ENCODE measurements at regions of chr6 and their contacts with region 1.

Region 1: DNA sequence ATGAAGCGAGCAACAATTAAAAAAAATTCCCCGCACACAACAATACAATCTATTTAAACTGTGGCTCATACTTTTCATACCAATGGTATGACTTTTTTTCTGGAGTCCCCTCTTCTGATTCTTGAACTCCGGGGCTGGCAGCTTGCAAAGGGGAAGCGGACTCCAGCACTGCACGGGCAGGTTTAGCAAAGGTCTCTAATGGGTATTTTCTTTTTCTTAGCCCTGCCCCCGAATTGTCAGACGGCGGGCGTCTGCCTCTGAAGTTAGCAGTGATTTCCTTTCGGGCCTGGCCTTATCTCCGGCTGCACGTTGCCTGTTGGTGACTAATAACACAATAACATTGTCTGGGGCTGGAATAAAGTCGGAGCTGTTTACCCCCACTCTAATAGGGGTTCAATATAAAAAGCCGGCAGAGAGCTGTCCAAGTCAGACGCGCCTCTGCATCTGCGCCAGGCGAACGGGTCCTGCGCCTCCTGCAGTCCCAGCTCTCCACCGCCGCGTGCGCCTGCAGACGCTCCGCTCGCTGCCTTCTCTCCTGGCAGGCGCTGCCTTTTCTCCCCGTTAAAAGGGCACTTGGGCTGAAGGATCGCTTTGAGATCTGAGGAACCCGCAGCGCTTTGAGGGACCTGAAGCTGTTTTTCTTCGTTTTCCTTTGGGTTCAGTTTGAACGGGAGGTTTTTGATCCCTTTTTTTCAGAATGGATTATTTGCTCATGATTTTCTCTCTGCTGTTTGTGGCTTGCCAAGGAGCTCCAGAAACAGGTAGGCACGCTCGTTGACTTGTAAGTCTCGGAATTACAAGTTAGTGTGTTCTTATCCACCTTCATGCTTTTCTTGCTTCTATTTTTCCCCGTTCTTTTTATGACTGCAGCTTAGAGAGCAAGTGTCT is at the start of gene EDN1:
- DNase-seq: peak; percentile 83
- H3K4me3 ChIP-seq: peak within 1 kb of the TSS; percentile 43
- H3K27ac ChIP-seq: peak within 1 kb of the TSS; percentile 79
- H3K4me1 ChIP-seq: peaks cover 8% of the 10 kb centered on the region
- H3K27me3 ChIP-seq: no peaks in the 10 kb centered on the region
- CTCF ChIP-seq: peak; percentile 52
- total RNA-seq, gene EDN1: 9.5 to 16.2 TPM

Region 2: GRCh38 chr6:12150812-12151432 is 139.3 kb before region 1 on chr6:
- intact Hi-C with region 1: loop called (anchors 10 kb)
- DNase-seq: peak; percentile 53
- H3K4me3 ChIP-seq: no peak overlapping the region
- H3K27ac ChIP-seq: peak overlapping the region; percentile 31
- H3K4me1 ChIP-seq: no peaks in the 10 kb centered on the region
- H3K27me3 ChIP-seq: no peaks in the 10 kb centered on the region
- CTCF ChIP-seq: peak; percentile 66

Region 3: GRCh38 chr6:12395898-12396297 is 105.7 kb after region 1 on chr6:
- intact Hi-C with region 1: no loop called
- DNase-seq: no peak
- H3K4me3 ChIP-seq: no peak overlapping the region
- H3K27ac ChIP-seq: no peak overlapping the region
- H3K4me1 ChIP-seq: no peaks in the 10 kb centered on the region
- H3K27me3 ChIP-seq: no peaks in the 10 kb centered on the region
- CTCF ChIP-seq: no peak

Region 4: GRCh38 chr6:12709116-12709515 is 418.9 kb after region 1 on chr6:
- intact Hi-C with region 1: no loop called
- DNase-seq: no peak
- H3K4me3 ChIP-seq: no peak overlapping the region
- H3K27ac ChIP-seq: no peak overlapping the region
- H3K4me1 ChIP-seq: no peaks in the 10 kb centered on the region
- H3K27me3 ChIP-seq: no peaks in the 10 kb centered on the region
- CTCF ChIP-seq: no peak